Dendritic cell treated with granulocyte-macrophage colony-stimulating factor and Interleukin-4, amounts not matched to agents 40 ng/mL and 50 ng/mL, for 4 days (primary cell): ENCODE measurements at regions of chr11 and their contacts with region 1.

Region 1: GRCh38 chr11:105181100-105181499 is 41.5 kb upstream of the CARD18 start:
- H3K4me3 Mint-ChIP-seq: no peak overlapping the region
- H3K27ac Mint-ChIP-seq: peak overlapping the region; percentile 82
- H3K4me1 Mint-ChIP-seq: peaks cover 20% of the 10 kb centered on the region
- H3K27me3 Mint-ChIP-seq: no peaks in the 10 kb centered on the region

Region 2: DNA sequence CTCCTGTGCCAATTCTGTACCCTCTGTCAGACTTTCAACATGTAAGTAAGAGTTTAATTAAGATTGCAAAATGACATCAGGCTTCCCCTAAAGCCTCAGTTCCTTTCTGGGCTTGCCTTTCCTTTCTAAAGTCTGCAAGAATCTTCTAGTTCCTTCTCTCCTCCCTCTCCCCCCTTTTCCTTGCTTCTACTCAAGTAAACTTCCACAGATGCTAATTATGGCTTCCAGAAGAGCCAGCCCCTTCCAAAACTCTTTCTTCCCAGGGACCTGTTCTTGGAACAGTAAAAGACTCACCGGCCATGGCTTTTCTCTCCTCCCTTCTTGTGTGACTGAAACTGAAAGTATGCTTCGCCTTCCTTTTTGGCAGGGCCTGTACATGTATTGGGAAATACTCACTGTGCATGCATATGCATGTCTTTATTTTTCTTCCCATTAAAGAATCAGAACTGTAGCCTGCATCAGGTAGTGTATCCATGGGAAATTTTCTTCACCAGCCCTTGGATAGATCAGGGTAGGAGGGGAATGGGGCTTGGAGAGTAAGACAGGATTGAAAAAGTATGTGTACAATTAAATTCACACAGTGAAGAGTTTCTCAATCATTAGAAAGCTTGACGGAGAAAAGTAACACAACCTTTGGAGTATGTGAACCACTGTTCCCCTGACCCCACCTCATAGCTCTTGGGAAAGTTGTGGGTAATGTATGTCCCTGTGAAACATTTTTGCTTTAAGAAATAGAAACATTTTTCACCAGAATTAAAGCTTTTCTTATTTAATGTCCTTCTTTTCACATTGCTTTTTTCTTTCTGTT is 146.1 kb before region 1 on chr11 and contains the start of gene CASP1:
- intact Hi-C with region 1: loop called (anchors 10 kb)
- H3K4me3 Mint-ChIP-seq: peak within 1 kb of the TSS; percentile 88
- H3K27ac Mint-ChIP-seq: peak within 1 kb of the TSS; percentile 96
- H3K4me1 Mint-ChIP-seq: peaks cover 63% of the 10 kb centered on the region
- H3K27me3 Mint-ChIP-seq: no peaks in the 10 kb centered on the region